ENCODE measurements at regions of chr22 and their contacts with region 1.

Region 1: DNA sequence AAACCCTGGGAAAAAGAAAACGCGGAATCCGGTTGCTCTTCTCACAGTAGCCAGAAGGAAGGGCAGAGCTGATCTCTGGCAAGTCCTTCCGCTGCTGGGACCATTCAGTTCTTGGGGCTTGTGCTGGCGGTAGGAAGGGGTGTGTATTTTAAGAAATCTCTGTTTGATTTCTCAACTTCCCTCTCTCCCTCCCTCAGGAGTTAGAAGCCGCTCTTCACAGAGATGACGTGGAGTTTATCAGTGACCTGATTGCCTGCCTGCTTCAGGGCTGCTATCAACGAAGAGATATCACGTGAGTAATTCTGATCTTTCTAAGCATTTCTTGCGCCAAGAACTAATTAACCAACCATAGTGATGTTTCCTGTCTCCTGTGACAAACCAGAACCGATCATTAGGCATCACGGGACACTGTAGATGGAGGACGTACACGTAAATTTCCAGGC is 85.9 kb upstream of the SLC25A18 start:
- DNase-seq: peak; percentile 52 to 73
- ATAC-seq: peak; percentile 75 to 88 (median 84)
- H3K4me3 ChIP-seq: peak overlapping the region; percentile 36
- H3K27ac ChIP-seq: peak overlapping the region; percentile 71
- H3K4me1 ChIP-seq: peaks cover 57% of the 10 kb centered on the region
- H3K27me3 ChIP-seq: no peaks in the 10 kb centered on the region
- CTCF ChIP-seq: no peak

Region 2: GRCh38 chr22:17422736-17423343 is 54.6 kb before region 1 on chr22:
- intact Hi-C with region 1: no loop called
- DNase-seq: no peak
- ATAC-seq: peak in 1 of 4 donors; percentile 12
- H3K4me3 ChIP-seq: no peak overlapping the region
- H3K27ac ChIP-seq: peak overlapping the region; percentile 6
- H3K4me1 ChIP-seq: peaks cover 11% of the 10 kb centered on the region
- H3K27me3 ChIP-seq: no peaks in the 10 kb centered on the region
- CTCF ChIP-seq: no peak

Region 3: GRCh38 chr22:17436382-17436980 is 40.9 kb before region 1 on chr22:
- intact Hi-C with region 1: loop called (anchors 5 kb)
- DNase-seq: no peak
- ATAC-seq: peak; percentile 53 to 80 (median 64)
- H3K4me3 ChIP-seq: peak overlapping the region; percentile 39
- H3K27ac ChIP-seq: peak overlapping the region; percentile 82
- H3K4me1 ChIP-seq: peaks cover 87% of the 10 kb centered on the region
- H3K27me3 ChIP-seq: no peaks in the 10 kb centered on the region
- CTCF ChIP-seq: no peak

Region 4: GRCh38 chr22:17443405-17444203 is 33.8 kb before region 1 on chr22:
- intact Hi-C with region 1: loop called (anchors 5 kb)
- DNase-seq: peak; percentile 30 to 62
- ATAC-seq: peak; percentile 81 to 89 (median 84)
- H3K4me3 ChIP-seq: peak overlapping the region; percentile 53
- H3K27ac ChIP-seq: peak overlapping the region; percentile 86
- H3K4me1 ChIP-seq: peaks cover 34% of the 10 kb centered on the region
- H3K27me3 ChIP-seq: no peaks in the 10 kb centered on the region
- CTCF ChIP-seq: no peak

Measured in psoas muscle (tissue), 8 donors.